Activated B cell treated with CpG ODN at 0.5 μM for 24 hours (primary cell): ENCODE measurements at regions of chr1 and their contacts with region 1.

Region 1: DNA sequence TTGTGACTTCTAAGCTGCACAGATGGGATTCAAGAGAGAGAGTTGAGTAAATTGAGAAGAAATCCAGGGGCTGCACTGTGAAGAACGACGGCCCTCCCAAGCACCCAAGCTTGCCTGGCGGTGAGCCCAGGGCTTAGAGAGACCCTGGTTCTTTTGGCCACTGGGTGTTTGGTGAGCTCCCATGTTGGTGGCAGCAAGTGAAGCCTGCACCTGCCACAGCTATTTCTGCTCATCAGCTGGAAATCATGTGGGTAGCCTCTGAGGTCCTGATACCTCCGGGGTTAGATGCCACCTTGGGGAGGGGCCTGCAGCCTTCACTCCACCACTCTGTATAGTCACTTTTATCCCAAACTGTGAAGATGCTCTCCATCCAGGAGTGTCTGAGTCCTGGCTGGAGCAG is 6.2 kb upstream of the BTG2 start:
- DNase-seq: no peak
- ATAC-seq: peak; percentile 70
- H3K4me3 Mint-ChIP-seq: peak overlapping the region; percentile 61
- H3K27ac Mint-ChIP-seq: peak overlapping the region; percentile 91
- H3K4me1 Mint-ChIP-seq: peaks cover 95% of the 10 kb centered on the region
- H3K27me3 Mint-ChIP-seq: no peaks in the 10 kb centered on the region
- CTCF ChIP-seq: no peak

Region 2: GRCh38 chr1:203311368-203312301 is 12.5 kb after region 1 on chr1:
- CTCF ChIA-PET with region 1: interaction called, 5 read pairs
- POLR2A ChIA-PET with region 1: interaction called, 1,942 read pairs
- intact Hi-C with region 1: no loop called
- DNase-seq: no peak
- ATAC-seq: no peak
- H3K4me3 Mint-ChIP-seq: peak overlapping the region; percentile 28
- H3K27ac Mint-ChIP-seq: peak overlapping the region; percentile 46
- H3K4me1 Mint-ChIP-seq: peaks cover 67% of the 10 kb centered on the region
- H3K27me3 Mint-ChIP-seq: no peaks in the 10 kb centered on the region
- CTCF ChIP-seq: no peak

Region 3: DNA sequence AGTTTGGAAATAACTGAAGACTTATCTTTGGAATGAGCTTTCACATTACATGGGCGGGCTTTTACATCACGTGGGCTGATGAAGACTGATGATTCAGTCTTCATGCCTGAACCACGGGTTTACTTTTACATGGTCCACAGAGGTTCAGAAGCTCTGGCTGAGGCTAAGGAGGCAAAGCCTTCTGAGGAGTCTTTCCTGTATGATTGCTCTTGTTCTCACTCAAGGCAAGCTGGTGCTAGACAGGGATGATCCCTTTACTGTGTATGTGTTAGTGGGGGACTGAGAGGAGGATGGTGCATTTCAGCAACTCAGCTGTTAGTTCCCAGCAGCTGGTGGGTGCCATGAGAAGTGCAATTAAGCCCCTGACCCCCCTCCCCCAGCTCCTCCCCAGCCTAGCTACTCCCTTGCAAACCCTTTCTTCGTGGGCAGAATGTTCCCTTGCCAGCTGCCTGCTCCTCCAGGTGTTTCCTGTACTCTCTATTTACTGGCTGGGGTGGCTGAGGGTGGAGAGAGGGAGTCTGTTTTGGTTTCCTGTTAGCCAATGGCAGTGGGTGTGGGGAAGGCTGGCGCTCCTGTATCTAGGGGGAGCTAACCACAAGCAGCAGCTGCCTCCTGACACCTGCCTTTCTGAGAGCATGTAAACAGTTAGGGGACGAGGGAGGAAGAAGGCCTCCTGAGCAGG is 21.6 kb after region 1 on chr1:
- CTCF ChIA-PET with region 1: interaction called, 16 read pairs
- POLR2A ChIA-PET with region 1: interaction called, 1,942 read pairs
- intact Hi-C with region 1: no loop called
- DNase-seq: peak; percentile 53
- ATAC-seq: peak; percentile 66
- H3K4me3 Mint-ChIP-seq: peak overlapping the region; percentile 72
- H3K27ac Mint-ChIP-seq: peak overlapping the region; percentile 96
- H3K4me1 Mint-ChIP-seq: peaks cover 90% of the 10 kb centered on the region
- H3K27me3 Mint-ChIP-seq: no peaks in the 10 kb centered on the region
- CTCF ChIP-seq: no peak

Region 4: DNA sequence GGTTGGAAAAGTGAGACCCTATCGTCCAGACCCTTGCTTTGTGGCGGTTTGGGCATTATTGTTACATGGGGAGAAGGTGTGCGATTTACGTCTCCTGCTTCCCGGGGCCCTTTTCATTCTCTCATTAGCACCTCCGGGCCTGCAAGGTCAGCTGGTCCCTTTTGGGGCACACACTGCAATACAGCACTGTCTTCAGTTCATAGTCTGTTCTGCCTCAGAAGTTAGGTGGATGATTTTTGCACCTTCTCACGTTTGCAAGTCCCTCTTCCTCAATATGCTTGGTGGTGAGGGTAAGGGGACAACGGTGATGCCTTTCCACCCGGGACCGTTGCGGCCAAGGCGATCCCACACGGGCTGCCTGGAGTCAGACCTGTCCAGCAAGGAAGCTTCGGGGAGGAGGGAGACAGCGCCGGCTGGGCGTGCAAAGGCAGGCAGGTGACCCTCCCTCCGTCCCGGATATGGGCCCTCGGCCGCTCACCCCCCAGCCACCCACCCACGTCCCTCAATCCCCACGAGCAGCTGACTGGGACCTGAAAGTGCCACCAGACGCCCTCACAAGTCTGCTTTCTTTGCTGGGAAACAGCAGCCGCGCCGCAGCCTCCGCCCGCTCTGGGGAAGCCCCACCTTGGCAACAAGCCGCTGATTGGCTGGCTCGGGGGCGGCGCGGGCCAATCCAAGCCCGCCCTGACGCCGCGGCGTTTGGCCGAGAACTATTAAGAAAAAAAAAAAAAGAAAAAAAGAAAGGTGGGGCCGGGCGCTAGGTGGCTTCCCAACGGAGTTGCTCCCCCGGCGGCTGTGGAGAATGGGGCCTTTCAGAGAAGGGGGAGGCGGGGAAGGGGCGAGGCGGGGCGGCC is 27.9 kb after region 1 on chr1:
- CTCF ChIA-PET with region 1: interaction called, 16 read pairs
- POLR2A ChIA-PET with region 1: interaction called, 1,136 read pairs
- intact Hi-C with region 1: no loop called
- DNase-seq: peak; percentile 91
- ATAC-seq: peak; percentile 79
- H3K4me3 Mint-ChIP-seq: peak overlapping the region; percentile 84
- H3K27ac Mint-ChIP-seq: peak overlapping the region; percentile 96
- H3K4me1 Mint-ChIP-seq: peaks cover 77% of the 10 kb centered on the region
- H3K27me3 Mint-ChIP-seq: no peaks in the 10 kb centered on the region
- CTCF ChIP-seq: no peak